HepG2 (cell line): ENCODE measurements at regions of chr3 and their contacts with region 1.

Region 1: DNA sequence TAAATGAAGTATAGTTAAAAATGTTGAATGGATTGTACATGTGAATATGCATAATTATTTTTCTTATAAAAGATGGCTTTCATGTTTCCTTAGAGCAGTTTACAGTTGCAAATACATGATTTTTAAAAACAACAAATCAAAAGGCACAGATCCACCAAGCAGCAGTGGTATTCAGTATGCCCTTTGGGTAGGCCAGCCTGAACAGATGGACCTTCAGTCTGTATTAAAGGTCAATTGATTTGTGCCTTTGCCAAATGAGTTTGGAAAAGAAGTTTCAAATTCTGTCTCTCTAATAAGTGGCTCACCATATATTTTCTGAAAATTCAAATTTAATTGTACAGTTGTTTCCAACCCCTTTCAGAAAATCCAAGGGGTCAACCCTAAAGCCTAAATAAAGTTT is 477.1 kb downstream of the NSUN3 start:
- DNase-seq: no peak
- ATAC-seq: no peak
- H3K4me3 ChIP-seq: no peak overlapping the region
- H3K27ac ChIP-seq: no peak overlapping the region
- H3K4me1 ChIP-seq: no peaks in the 10 kb centered on the region
- H3K27me3 ChIP-seq: no peaks in the 10 kb centered on the region
- CTCF ChIP-seq: no peak
- EP300 ChIP-seq: no peak
- POLR2A ChIP-seq: no peak
- RAD21 ChIP-seq: no peak

Region 2: DNA sequence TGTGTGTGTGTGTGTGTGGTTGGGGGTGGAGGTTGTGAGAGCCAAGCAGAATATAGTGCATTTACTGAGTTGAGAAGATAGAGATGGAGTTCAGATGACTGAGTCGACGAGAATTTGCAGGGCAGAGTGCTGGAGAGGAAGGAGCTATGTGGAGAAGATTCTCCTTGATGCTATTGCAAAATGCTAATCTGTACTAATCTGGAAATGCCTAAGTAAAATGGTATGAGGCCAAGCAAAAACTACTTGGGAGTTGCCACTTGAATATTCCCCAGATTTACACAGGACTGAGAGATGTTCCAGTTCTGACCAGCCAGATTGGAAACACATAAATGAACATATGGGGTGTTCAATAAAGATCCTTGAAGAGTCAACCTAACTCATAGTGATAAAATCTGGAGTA is 160.7 kb before region 1 on chr3:
- CTCF ChIA-PET with region 1: no interaction called
- POLR2A ChIA-PET with region 1: no interaction called
- in situ Hi-C with region 1: no loop called
- intact Hi-C with region 1: no loop called
- DNase-seq: no peak
- ATAC-seq: no peak
- H3K4me3 ChIP-seq: no peak overlapping the region
- H3K27ac ChIP-seq: no peak overlapping the region
- H3K4me1 ChIP-seq: no peaks in the 10 kb centered on the region
- H3K27me3 ChIP-seq: no peaks in the 10 kb centered on the region; a peak in 1 of 5 replicates
- CTCF ChIP-seq: no peak
- EP300 ChIP-seq: no peak
- POLR2A ChIP-seq: no peak
- RAD21 ChIP-seq: no peak

Region 3: GRCh38 chr3:95319921-95320494 is 780.1 kb after region 1 on chr3:
- CTCF ChIA-PET with region 1: no interaction called
- POLR2A ChIA-PET with region 1: no interaction called
- in situ Hi-C with region 1: no loop called
- intact Hi-C with region 1: loop called (anchors 5 kb)
- DNase-seq: no peak
- ATAC-seq: no peak
- H3K4me3 ChIP-seq: no peak overlapping the region
- H3K27ac ChIP-seq: no peak overlapping the region
- H3K4me1 ChIP-seq: no peaks in the 10 kb centered on the region
- H3K27me3 ChIP-seq: no peaks in the 10 kb centered on the region
- CTCF ChIP-seq: no peak
- EP300 ChIP-seq: no peak
- POLR2A ChIP-seq: no peak
- RAD21 ChIP-seq: no peak